Right cardiac atrium (tissue), 5 donors: ENCODE measurements at regions of chr2 and their contacts with region 1.

Region 1: DNA sequence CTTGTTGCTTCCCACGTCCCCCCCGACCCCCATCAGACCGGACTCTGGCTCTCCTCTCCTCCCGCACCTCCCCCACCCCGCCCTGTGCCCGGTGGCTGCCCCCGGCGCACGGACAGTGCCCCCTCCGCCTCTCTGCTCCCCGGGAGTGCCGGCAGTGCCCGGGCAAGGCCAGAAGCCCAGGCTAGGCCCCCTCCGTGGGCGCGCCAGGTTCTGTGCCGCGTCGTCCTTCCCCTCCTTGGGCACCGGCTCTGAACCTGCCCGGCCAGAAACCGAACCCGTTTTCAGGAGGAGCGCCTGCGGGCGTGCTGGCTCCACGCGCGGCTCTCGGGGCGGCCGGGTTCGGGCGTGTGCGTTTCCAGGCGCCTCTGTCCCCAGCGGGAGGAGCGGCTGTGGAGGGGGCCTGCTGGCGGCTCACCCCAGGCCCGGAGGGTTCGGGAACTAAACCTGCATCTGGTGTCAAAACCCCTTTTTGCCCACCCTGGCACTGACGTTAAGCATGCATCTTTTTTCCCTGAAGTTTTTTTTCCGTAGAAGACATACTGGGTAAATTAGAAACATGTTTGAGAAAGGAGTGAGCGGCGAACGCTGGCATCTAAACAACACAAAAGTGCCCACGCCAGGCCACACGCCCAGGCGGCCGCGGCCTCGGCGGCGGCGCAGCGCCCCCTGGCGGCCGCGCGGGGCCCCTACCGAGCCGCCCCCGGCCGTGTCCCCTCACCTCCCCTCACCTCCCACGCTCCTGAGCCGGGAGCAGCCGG is 123.9 kb upstream of the SLC1A4 start:
- DNase-seq: peak; percentile 67 to 89 (median 85)
- ATAC-seq: peak; percentile 84 to 88
- H3K4me3 ChIP-seq: peak overlapping the region; percentile 63
- H3K27ac ChIP-seq: peak overlapping the region; percentile 92
- H3K4me1 ChIP-seq: peaks cover 3% of the 10 kb centered on the region
- H3K27me3 ChIP-seq: no peaks in the 10 kb centered on the region

Region 2: DNA sequence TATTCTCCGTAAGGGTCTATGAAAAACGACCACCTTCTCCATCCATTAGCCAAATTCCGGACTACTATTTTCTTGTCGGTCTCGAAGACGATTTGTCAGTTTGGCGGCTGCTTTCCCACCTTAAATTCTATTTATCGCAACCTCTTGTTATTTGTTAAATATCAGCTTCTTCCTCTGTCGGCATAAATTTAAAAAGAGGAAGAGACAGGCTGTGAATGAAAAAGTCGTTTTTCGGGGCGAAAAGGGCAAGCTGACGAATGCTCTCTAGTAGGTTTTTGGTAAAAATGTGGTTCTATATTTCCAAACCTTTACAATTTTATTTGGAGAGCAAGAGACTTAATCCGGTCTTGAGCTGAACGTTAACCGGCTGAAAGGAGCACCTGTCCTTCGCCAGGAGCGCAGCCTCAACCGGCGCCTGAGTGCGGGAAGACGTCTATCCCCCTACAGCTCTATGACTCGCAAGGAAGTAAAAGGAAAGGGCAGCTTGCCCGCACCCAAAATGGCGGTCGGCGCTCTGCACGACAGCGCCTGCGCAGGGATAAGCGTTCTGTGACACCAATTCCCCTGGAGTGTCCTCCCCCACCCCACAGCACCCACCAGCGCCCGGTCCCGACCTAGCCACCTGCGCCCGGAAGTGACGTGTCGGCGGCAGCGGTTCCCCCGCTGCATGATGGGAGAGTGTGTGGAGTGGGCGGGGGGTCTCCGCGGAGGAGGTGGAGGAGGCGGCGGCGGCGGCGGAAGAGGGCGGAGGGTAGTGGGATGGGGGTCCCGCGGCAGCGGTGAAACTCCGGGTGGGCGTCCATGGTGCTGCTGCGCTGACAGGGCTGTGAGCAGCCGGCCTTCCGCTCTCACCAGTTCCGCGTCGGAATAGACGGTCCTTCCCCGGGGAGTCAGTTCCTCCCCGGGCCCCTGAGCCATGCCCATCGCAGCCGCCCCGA is 341.3 kb before region 1 on chr2 and contains the start of gene AFTPH:
- intact Hi-C with region 1: loop called in 2 of 4 experiments (anchors 10 kb)
- DNase-seq: peak; percentile 99 to 100 (median 99)
- ATAC-seq: peak; percentile 99 to 100
- H3K4me3 ChIP-seq: peak within 1 kb of the TSS; percentile 72
- H3K27ac ChIP-seq: peak within 1 kb of the TSS; percentile 84
- H3K4me1 ChIP-seq: no peaks in the 10 kb centered on the region
- H3K27me3 ChIP-seq: no peaks in the 10 kb centered on the region
- total RNA-seq, gene AFTPH: 12.4 to 16.3 (median 14.6) TPM

Region 3: DNA sequence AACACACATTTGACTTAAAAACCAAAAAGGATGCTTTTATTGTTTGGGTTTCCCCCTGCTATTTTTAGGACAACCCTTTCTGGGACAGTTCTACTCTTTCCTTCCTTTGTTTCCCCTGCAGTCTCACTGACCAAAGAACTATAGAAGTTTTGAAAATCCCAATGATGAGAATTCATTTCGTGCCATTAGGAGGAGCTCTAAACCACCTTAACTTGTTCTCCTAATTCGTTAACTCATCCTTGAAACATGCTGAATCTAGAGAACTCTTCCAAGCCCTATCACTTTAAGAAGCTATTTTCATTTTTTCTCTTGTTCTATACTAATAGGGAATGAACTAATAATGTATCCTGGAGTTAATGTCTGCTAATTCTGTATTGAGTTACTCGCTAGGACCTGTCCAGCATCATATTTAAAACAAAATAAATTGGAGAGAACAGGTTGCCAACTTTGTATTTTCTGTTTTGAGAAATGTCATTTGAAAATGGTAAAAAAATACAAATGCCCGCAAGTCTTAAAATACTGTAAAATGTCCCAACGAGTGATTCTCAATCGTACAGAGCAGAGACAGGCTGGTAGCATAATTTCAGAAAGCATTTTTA is 278.3 kb before region 1 on chr2:
- intact Hi-C with region 1: loop called in 3 of 4 experiments (anchors 2 to 5 kb)
- DNase-seq: no peak
- ATAC-seq: peak; percentile 66 to 70
- H3K4me3 ChIP-seq: no peak overlapping the region
- H3K27ac ChIP-seq: no peak overlapping the region
- H3K4me1 ChIP-seq: peaks cover 1% of the 10 kb centered on the region
- H3K27me3 ChIP-seq: no peaks in the 10 kb centered on the region

Region 4: DNA sequence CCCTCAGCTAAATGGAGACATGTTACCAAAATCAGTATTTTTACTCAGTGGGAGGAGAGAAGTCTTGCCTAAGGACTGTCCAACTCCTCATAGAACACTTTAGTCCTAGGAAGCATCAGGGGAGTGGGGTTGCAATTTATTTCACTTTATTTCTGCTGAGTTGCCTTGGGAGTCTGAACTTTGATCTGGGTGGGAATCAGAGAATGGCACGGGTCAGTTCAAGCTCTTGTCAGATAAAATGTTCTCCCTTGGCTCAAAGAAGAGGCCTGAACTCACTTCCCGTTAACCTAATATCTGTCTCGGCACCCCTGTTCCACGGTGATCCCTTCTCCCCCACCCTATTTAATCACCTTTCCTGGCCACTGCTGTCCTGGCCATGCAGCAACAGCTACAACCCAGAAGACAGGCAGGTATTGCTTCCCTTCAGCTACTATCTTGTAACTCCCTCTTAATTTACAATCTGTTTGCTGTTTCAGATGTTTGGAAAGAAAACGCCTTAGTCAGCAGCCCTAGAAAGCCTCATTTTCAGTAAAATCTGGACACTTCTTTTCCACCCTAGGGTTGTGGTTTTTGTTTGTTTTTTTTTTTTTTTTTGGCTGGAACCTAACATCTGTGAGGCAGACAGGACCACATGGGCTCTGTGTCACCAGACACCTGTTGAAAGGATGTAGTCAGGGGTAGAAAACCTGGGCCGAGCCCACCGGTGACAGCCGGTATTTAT is 264.1 kb before region 1 on chr2:
- intact Hi-C with region 1: loop called in 1 of 4 experiments (anchors 5 kb)
- DNase-seq: no peak
- ATAC-seq: no peak
- H3K4me3 ChIP-seq: no peak overlapping the region
- H3K27ac ChIP-seq: no peak overlapping the region
- H3K4me1 ChIP-seq: no peaks in the 10 kb centered on the region
- H3K27me3 ChIP-seq: no peaks in the 10 kb centered on the region

Region 5: GRCh38 chr2:64644177-64645004 is 220.9 kb before region 1 on chr2:
- intact Hi-C with region 1: loop called (anchors 2 to 5 kb)
- DNase-seq: peak; percentile 85 to 94 (median 91)
- ATAC-seq: peak; percentile 94 to 96
- H3K4me3 ChIP-seq: peak overlapping the region; percentile 44
- H3K27ac ChIP-seq: peak overlapping the region; percentile 94
- H3K4me1 ChIP-seq: peaks cover 14% of the 10 kb centered on the region
- H3K27me3 ChIP-seq: no peaks in the 10 kb centered on the region

Region 6: DNA sequence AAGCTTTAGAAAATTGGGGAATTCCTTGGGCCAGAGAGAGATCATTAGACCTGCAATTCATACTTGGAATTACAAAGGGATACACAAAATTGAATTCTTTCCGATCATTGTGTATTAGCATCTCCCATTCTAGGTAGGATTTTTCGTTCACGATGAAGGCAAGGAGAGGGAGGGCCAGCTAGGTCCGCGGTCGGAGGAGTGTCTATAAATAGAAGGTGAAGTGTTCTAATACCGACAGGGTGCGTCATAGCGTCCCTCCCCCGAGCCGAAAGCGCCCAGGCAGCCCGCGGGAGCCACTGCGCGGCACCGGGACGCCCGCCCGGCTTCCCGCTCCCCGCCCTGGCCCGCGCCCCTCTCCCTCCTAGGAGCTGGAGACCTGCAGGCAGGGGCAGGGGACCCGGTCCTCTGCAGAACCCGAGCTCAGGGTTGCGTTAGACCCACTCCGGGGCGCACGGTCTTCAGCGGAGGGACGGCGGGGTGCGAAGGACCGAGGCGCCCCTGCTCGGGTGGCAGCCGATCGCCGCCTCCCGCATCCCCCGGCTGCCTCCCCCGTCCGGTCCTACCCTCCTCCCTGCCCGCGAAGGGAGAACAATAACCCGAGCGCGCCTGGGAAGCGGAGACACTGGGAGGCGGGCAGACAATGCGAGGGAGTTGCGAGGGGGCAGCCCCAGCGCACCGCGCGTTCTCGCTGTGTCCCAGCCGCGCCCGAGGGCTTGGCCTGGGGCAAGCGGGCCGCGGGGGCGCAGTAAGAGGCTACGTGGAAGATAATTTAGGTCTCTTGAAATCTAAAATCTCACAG is 97.4 kb before region 1 on chr2:
- intact Hi-C with region 1: loop called in 2 of 4 experiments (anchors 5 to 10 kb)
- DNase-seq: peak; percentile 88 to 96 (median 95)
- ATAC-seq: peak; percentile 96
- H3K4me3 ChIP-seq: peak overlapping the region; percentile 52
- H3K27ac ChIP-seq: peak overlapping the region; percentile 96
- H3K4me1 ChIP-seq: no peaks in the 10 kb centered on the region
- H3K27me3 ChIP-seq: no peaks in the 10 kb centered on the region

Region 7: DNA sequence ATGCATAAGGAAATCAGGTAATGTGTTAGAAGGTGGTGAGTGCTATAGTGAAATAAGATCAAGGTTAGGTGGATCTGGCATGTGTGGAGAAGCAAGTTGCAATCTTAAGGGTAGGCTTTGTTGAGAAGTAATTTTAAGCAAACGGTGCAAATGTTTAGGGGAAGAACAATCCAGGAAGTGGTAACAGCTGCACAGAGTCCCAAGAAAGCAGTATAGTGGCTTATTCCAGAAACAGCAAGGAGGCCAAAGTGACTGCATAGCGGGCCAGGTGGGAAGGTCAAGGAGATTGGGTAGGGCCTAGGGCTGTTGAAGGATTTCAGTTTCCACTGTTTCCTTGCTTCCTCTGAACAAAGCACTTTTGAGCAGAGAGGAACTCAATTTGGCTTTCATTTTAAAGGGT is 294.7 kb after region 1 on chr2:
- intact Hi-C with region 1: no loop called
- DNase-seq: no peak
- ATAC-seq: no peak
- H3K4me3 ChIP-seq: no peak overlapping the region
- H3K27ac ChIP-seq: no peak overlapping the region
- H3K4me1 ChIP-seq: peaks cover 5% of the 10 kb centered on the region
- H3K27me3 ChIP-seq: no peaks in the 10 kb centered on the region